ENCODE measurements at regions of chr1 and their contacts with region 1.

Region 1: GRCh38 chr1:212814537-212815334 is 23.0 kb downstream of the TATDN3 start:
- DNase-seq: no peak
- ATAC-seq: peak in 2 of 4 donors; percentile 37 to 38
- H3K4me3 ChIP-seq: no peak overlapping the region
- H3K27ac ChIP-seq: no peak overlapping the region
- H3K4me1 ChIP-seq: peaks cover 0 to 5% (median 0%) of the 10 kb centered on the region in 12 donors
- H3K27me3 ChIP-seq: no peaks in the 10 kb centered on the region
- CTCF ChIP-seq: peak in 11 of 12 donors; percentile 15 to 55 (median 35)
- POLR2A ChIP-seq: no peak

Region 2: DNA sequence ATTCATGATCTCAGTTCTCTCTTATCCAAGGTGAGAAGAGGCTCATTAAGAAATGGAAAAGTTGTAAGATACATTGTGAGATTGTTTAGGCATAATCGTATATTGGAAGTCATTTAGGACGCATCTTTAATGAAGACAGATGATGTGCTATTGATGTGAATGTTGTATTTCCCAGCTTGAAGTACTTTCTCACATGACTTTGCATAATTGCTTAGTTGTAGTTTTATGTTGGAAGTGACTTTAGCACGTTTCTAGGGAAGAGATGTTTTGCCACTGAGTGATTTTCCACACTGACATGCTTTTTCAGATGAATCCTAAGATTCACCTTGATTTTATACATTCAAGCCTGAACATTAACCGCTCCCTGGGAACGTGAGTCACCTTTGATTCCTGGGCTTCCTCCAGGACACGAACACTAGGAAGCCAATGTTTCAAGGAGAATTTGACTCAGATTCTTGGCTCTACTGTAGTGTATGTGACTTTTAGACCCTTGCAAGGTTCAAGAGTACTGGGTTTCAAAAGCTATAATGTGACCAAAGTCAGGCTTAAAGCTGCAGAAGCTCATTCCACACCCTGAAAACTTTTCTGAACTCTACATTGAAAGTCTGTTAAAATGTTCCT is 173.1 kb after region 1 on chr1:
- intact Hi-C with region 1: loop called in 2 of 10 experiments (anchors 2 to 10 kb)
- DNase-seq: no peak
- ATAC-seq: no peak
- H3K4me3 ChIP-seq: no peak overlapping the region
- H3K27ac ChIP-seq: no peak overlapping the region
- H3K4me1 ChIP-seq: peaks cover 0 to 6% (median 0%) of the 10 kb centered on the region in 12 donors
- H3K27me3 ChIP-seq: no peaks in the 10 kb centered on the region
- CTCF ChIP-seq: no peak
- POLR2A ChIP-seq: no peak

Region 3: DNA sequence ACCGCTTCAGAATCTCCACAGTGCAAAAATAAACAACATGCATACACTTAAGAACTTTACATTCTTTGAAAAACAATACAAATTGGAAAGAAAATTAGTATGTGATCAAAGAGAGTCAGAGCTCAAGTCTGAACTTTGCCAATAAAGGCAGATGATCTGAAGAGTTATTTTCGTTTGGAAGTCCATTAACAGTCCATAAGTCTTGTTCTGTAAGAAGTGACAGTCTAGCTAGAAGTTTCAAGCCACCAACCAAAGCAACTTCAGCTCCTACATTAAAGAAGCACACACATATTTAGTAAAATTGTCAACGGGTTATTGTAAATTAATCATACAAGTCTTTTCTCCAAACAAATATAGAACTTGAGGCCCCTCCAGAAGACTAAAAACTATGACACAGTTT is 180.2 kb after region 1 on chr1:
- intact Hi-C with region 1: loop called (anchors 2 to 10 kb)
- DNase-seq: no peak
- ATAC-seq: no peak
- H3K4me3 ChIP-seq: no peak overlapping the region
- H3K27ac ChIP-seq: no peak overlapping the region
- H3K4me1 ChIP-seq: peaks cover 0 to 6% (median 0%) of the 10 kb centered on the region in 12 donors
- H3K27me3 ChIP-seq: no peaks in the 10 kb centered on the region
- CTCF ChIP-seq: no peak
- POLR2A ChIP-seq: no peak

Region 4: DNA sequence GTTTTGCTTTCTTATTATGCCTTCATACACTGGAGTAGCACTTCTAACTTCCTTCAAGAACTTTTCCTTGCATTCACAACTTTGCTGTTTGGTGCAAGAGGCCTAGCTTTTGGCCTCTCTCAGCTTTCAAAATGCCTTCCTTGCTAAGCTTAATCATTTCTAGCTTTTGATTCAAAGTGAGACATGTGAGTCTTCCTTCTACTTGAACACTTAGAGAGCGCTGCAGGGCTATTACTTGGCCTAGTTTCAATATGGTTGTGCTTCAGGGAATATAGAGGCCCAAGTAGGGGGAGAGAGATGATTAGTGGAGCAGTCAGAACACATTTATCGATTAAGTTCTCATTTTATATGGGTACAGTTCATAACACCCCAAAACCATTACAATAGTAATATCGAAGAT is 188.5 kb after region 1 on chr1:
- intact Hi-C with region 1: loop called in 7 of 10 experiments (anchors 5 to 10 kb)
- DNase-seq: no peak
- ATAC-seq: no peak
- H3K4me3 ChIP-seq: no peak overlapping the region
- H3K27ac ChIP-seq: no peak overlapping the region
- H3K4me1 ChIP-seq: no peaks in the 10 kb centered on the region
- H3K27me3 ChIP-seq: no peaks in the 10 kb centered on the region
- CTCF ChIP-seq: no peak
- POLR2A ChIP-seq: no peak

Measured in heart left ventricle (tissue), 16 donors.